K562 (cell line): ENCODE measurements at regions of chr9 and their contacts with region 1.

Region 1: DNA sequence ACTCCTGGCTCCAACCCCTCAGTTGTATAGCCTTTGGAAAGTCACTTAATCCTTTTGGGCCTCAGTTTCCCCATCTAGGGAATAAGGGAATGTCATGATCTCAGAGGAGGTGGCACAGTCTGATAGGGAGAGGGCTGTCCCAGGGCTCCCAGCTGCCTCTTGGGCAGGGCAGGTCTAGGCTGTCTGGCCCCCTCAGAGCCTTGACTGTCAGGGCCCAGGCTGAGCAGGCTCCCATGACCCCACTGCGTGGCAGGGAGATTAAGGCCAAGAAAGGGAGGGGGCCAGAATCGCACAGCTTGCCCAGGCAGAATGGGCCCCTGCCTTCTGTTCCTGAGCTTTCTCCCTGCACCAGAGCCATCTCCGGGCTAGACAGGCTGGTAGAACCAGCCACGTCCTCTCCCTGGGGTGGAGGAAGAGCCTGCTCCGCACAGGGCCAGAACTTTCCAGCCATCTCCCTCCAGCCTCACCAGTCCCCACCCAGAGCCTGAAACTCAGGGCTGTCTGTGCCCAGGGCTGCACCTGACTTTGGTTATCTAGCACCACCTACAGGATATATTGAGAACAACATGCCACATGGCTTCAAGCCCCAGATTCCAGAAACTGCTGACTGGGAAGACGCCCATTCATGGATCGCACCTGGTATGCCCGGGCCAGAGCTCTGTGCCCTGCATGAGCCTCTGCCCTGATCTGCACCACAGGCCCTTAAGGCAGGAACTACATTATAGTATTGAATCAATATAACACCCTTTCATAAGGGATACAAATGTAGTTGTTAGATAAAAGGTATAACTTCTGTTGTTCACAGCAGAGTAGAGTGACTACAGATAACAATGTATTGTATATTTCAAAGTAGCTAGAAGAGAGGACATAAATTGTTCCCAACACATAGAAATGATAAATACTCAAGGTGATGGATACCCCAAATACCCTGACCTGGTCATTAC is 32.0 kb downstream of the NAIF1 start:
- DNase-seq: peak; percentile 81 to 88 (median 86)
- ATAC-seq: peak; percentile 97
- H3K4me3 ChIP-seq: no peak overlapping the region
- H3K27ac ChIP-seq: no peak overlapping the region
- H3K4me1 ChIP-seq: peaks cover 7 to 8% of the 10 kb centered on the region in 2 experiments
- H3K27me3 ChIP-seq: no peaks in the 10 kb centered on the region
- CTCF ChIP-seq: peak; percentile 93 to 95 (median 93)
- EP300 ChIP-seq: peak; percentile 48
- POLR2A ChIP-seq: no peak
- RAD21 ChIP-seq: peak; percentile 96 to 98

Region 2: DNA sequence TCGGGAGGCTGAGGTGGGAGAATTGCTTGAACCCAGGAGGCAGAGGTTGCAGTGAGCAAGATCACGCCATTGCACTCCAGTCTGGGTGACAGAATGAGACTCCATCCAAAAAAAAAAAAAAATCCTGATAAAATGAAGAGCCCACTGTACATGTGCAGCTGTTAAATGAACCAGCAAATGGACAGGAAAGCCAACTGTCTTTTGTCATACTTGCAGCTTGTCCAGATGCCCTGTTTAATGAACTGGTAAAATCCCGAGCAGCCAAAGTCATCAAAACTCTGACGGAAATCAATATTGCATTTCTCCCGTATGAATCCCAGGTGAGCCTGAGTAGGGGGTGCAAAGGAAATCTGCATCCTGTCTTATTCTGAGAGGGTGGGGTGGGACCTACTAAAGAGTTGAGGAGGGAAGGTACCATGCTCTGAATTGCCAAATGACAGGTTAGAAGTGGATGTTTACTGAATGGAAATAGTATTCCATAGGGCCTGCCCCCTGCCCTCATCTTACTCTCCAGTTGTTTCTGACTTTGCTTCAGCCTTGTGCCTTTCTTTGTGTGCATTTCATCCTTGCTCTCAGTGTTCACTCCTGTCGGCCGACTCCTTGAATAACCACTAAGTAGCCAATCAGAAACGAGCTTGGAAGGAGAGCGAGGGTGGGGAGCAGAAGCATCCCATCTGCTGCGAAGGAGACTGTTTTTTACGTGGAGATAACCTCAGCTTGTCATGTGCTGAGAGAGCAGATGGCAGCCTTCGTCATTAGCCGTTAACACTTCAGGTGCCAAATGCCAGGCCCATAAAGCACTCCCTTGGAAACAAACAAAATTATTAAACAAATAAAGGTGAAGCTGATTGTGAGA is 374.0 kb before region 1 on chr9:
- CTCF ChIA-PET with region 1: no interaction called
- POLR2A ChIA-PET with region 1: no interaction called
- in situ Hi-C with region 1: no loop called
- intact Hi-C with region 1: no loop called
- DNase-seq: peak in 1 of 4 experiments; percentile 47
- ATAC-seq: no peak
- H3K4me3 ChIP-seq: no peak overlapping the region
- H3K27ac ChIP-seq: no peak overlapping the region
- H3K4me1 ChIP-seq: peaks cover 6% of the 10 kb centered on the region in 2 experiments; a peak in 4 of 5 replicates
- H3K27me3 ChIP-seq: no peaks in the 10 kb centered on the region
- CTCF ChIP-seq: no peak
- EP300 ChIP-seq: no peak
- POLR2A ChIP-seq: no peak
- RAD21 ChIP-seq: no peak

Region 3: GRCh38 chr9:127937388-127938280 is 97.5 kb before region 1 on chr9 and contains the start of gene DPM2:
- CTCF ChIA-PET with region 1: interaction called, 36 read pairs
- POLR2A ChIA-PET with region 1: interaction called, 8 read pairs
- in situ Hi-C with region 1: loop called (anchors 5 kb)
- intact Hi-C with region 1: no loop called
- DNase-seq: peak; percentile 90 to 96 (median 90)
- ATAC-seq: peak; percentile 88
- H3K4me3 ChIP-seq: peak within 1 kb of the TSS; percentile 70
- H3K27ac ChIP-seq: peak within 1 kb of the TSS; percentile 88
- H3K4me1 ChIP-seq: peaks cover 68 to 87% of the 10 kb centered on the region in 2 experiments
- H3K27me3 ChIP-seq: no peaks in the 10 kb centered on the region
- CTCF ChIP-seq: no peak; a peak in 1 of 6 replicates
- EP300 ChIP-seq: no peak; the same call in 1 of the 2 replicates
- POLR2A ChIP-seq: peak; percentile 82
- RAD21 ChIP-seq: no peak
- polyA plus RNA-seq, gene DPM2: 43.5 to 69.3 TPM

Region 4: DNA sequence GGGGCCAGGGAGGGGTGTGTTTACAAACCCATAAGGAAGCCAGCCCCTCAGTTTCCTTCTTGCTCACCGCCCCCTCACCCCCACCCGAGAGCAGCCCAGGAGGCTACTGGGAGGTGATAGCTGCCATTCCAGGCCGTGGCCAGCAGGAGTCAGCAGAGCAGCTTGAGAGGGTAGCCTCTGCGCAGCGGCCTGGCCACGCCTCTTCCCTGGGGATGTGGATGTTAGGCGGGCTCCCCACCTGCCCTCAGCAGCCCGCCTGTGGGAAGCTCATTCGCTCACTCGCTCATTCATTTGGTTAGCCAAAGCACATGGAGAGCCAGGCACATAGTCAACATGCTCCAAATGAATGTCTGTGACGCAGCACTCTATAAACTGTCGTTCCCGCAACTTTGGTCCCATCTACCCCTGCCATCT is 91.4 kb before region 1 on chr9:
- CTCF ChIA-PET with region 1: interaction called, 36 read pairs
- POLR2A ChIA-PET with region 1: interaction called, 8 read pairs
- in situ Hi-C with region 1: loop called (anchors 5 kb)
- intact Hi-C with region 1: loop called (anchors 1 kb)
- DNase-seq: peak; percentile 82 to 89 (median 84)
- ATAC-seq: peak; percentile 88
- H3K4me3 ChIP-seq: no peak overlapping the region
- H3K27ac ChIP-seq: peak overlapping the region; percentile 19; the same call in 1 of the 3 replicates
- H3K4me1 ChIP-seq: peaks cover 38 to 65% of the 10 kb centered on the region in 2 experiments
- H3K27me3 ChIP-seq: no peaks in the 10 kb centered on the region
- CTCF ChIP-seq: peak; percentile 93 to 95 (median 94)
- EP300 ChIP-seq: no peak
- POLR2A ChIP-seq: no peak
- RAD21 ChIP-seq: peak; percentile 94 to 97

Region 5: GRCh38 chr9:127955294-127956035 is 79.6 kb before region 1 on chr9:
- CTCF ChIA-PET with region 1: interaction called, 11 read pairs
- POLR2A ChIA-PET with region 1: no interaction called
- in situ Hi-C with region 1: loop called (anchors 10 kb)
- intact Hi-C with region 1: loop called (anchors 1 kb)
- DNase-seq: peak; percentile 78 to 85 (median 78)
- ATAC-seq: peak; percentile 93
- H3K4me3 ChIP-seq: no peak overlapping the region
- H3K27ac ChIP-seq: no peak overlapping the region
- H3K4me1 ChIP-seq: peaks cover 26 to 45% of the 10 kb centered on the region in 2 experiments
- H3K27me3 ChIP-seq: no peaks in the 10 kb centered on the region
- CTCF ChIP-seq: peak; percentile 59 to 75 (median 62)
- EP300 ChIP-seq: peak; percentile 38; the same call in 1 of the 2 replicates
- POLR2A ChIP-seq: no peak
- RAD21 ChIP-seq: peak; percentile 45 to 71

Region 6: GRCh38 chr9:127970401-127971313 is 64.4 kb before region 1 on chr9:
- CTCF ChIA-PET with region 1: interaction called, 3 read pairs
- POLR2A ChIA-PET with region 1: no interaction called
- in situ Hi-C with region 1: loop called (anchors 10 kb)
- intact Hi-C with region 1: no loop called
- DNase-seq: no peak
- ATAC-seq: no peak
- H3K4me3 ChIP-seq: no peak overlapping the region
- H3K27ac ChIP-seq: no peak overlapping the region
- H3K4me1 ChIP-seq: peaks cover 38 to 88% of the 10 kb centered on the region in 2 experiments
- H3K27me3 ChIP-seq: no peaks in the 10 kb centered on the region
- CTCF ChIP-seq: no peak
- EP300 ChIP-seq: no peak
- POLR2A ChIP-seq: no peak
- RAD21 ChIP-seq: no peak

Region 7: DNA sequence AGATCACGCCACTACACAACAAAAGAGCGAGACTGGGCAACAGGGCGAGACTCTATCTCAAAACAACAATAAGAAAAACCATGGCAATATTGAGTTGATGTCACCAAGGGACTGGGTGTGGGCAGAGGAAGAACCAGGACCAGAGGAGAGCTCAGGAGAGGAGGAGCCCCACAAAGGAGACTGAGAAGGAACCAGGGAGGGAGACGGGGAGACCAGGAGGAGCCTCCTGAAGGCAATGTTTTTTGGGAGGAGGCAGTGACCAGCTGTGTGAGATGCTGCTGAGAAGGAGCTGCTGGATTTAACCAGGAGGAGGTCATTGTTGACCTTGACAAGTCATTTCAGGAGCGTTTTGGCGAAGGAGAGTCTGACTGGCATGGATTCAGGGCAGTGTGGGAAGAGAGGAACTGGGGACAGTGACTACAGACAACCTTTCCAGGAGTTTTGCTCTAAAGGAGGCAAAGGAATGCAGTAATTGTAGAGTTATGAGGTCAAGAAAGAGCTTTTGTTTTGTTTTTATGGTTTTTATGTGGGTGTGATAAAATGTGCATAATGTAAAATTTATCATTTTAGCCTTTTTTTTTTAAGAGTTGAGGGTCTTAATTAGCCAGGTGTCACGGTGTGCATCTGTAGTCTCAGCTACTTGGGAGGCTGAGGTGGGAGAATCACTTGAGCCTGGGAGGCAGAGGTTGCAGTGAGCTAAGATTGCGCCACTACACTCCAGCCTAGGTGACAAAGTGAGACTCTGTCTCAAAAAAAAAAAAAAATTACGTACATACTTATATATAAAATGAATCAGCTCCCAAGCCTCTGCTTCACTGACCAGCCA is 269.3 kb after region 1 on chr9:
- CTCF ChIA-PET with region 1: no interaction called
- POLR2A ChIA-PET with region 1: no interaction called
- in situ Hi-C with region 1: no loop called
- intact Hi-C with region 1: no loop called
- DNase-seq: no peak
- ATAC-seq: no peak
- H3K4me3 ChIP-seq: no peak overlapping the region
- H3K27ac ChIP-seq: no peak overlapping the region
- H3K4me1 ChIP-seq: peaks cover 23 to 37% of the 10 kb centered on the region in 2 experiments
- H3K27me3 ChIP-seq: no peaks in the 10 kb centered on the region
- CTCF ChIP-seq: no peak
- EP300 ChIP-seq: no peak
- POLR2A ChIP-seq: no peak
- RAD21 ChIP-seq: no peak

Region 8: DNA sequence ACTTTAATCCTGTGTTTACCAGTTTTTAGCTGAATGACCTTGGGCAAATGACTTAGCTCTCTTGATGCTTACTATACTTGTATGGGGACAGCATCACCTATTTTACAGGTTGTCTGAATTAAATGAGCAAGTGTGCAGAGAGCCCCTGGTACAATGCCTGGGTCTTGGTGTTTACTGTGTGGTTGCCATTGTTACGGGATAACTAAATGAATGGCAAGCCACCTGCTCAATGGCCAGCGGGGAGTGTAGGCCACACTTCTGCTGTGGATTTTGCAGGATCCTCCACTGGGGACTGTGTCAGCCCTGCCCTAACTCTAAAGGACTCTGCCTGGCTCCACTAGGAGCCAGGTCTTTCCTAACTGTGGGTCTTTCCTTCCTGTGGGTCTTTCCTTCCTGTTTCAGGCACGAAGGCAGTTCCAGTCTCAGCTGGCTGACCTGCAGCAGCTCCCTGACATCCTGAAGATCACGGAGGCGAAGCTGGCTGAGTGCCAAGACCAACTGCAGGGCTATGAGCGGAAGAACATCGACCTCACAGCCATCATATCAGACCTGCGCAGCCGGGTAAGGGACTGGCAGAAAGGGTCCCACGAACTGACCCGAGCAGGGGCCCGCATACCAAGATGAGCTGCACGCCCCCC is 459.1 kb after region 1 on chr9:
- CTCF ChIA-PET with region 1: no interaction called
- POLR2A ChIA-PET with region 1: no interaction called
- in situ Hi-C with region 1: no loop called
- intact Hi-C with region 1: no loop called
- DNase-seq: peak; percentile 49 to 89 (median 65)
- ATAC-seq: peak; percentile 87
- H3K4me3 ChIP-seq: no peak overlapping the region
- H3K27ac ChIP-seq: peak overlapping the region; percentile 66
- H3K4me1 ChIP-seq: peaks cover 12 to 17% of the 10 kb centered on the region in 2 experiments
- H3K27me3 ChIP-seq: no peaks in the 10 kb centered on the region
- CTCF ChIP-seq: no peak
- EP300 ChIP-seq: peak; percentile 14; the same call in 1 of the 2 replicates
- POLR2A ChIP-seq: no peak
- RAD21 ChIP-seq: 0 out of 4 replicates have a peak, but pooled peaks of 1 of the 2 experiments have one; percentile 23